ENCODE measurements at regions of chr10 and their contacts with region 1.

Region 1: GRCh38 chr10:59625721-59626522 is 83.7 kb downstream of the SLC16A9 start:
- DNase-seq: peak; percentile 24 to 26
- ATAC-seq: peak; percentile 89 to 93
- H3K4me3 ChIP-seq: no peak overlapping the region
- H3K27ac ChIP-seq: no peak overlapping the region
- H3K4me1 ChIP-seq: no peaks in the 10 kb centered on the region
- H3K27me3 ChIP-seq: no peaks in the 10 kb centered on the region
- CTCF ChIP-seq: peak; percentile 76 to 86 (median 84)
- POLR2A ChIP-seq: no peak

Region 2: DNA sequence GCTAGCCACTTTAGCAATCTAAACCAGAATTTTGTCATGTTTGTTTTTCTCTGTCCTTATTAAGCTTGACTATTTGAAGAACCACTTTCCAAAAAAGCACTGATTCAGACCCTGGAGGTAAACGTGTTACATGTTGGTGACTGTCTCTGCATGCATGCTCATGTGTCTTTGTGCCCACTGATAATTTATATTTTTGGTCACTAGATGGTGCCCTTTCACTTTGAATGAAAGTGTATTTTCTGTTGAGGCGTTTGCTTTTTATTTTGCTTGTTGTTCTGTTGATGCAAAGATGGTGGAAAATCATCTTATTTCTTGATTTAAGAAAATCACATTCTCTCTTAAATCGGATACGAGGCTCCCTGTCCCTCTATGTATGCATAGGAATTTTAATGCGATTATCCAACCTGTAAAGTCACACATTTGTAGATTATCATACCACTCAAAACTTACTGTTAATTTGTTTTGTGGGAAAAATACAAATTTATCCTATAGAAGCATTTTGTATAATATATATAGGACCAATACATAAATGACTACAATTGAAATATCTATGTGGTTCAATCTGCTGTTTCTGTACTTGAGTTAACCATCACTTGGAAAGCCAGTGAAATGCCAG is 843.9 kb before region 1 on chr10:
- in situ Hi-C with region 1: loop called in 2 of 4 experiments (anchors 25 kb)
- intact Hi-C with region 1: loop called (anchors 5 kb)
- DNase-seq: no peak
- ATAC-seq: peak; percentile 50 to 61
- H3K4me3 ChIP-seq: no peak overlapping the region
- H3K27ac ChIP-seq: peak overlapping the region; percentile 13 to 55 (median 40)
- H3K4me1 ChIP-seq: peaks cover 10 to 12% of the 10 kb centered on the region in 2 donors
- H3K27me3 ChIP-seq: no peaks in the 10 kb centered on the region
- CTCF ChIP-seq: peak in 4 of 5 experiments; percentile 33 to 60 (median 53)
- POLR2A ChIP-seq: no peak

Region 3: DNA sequence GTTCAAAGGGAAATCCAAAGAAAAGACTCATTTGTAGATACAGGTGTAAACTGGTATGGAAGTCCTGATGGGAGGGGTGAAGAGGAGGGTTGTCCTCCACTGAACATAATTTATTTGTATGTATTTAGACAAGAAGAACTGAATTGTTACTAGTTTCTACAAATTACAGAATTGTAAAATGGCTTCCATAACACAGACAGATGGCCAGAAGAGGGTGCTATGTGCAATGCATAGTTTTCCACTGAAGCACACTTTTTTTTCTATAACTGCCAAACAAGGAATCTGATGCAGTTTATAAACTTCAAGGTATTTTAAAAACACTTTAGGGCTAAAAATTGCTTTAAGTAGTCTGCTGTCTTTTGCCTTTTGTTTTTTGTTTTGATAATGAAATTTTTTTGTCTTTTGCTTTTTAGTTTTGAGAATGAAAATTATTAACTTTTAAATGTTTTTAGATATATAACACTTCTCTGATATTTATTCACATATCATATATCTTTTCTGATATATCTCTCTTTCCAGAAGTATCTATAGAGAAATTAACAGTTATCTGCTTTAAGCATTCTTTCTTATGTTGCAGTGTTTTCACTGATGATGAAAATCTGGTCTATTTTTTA is 391.0 kb before region 1 on chr10:
- in situ Hi-C with region 1: loop called (anchors 5 to 25 kb)
- intact Hi-C with region 1: loop called (anchors 1 kb)
- DNase-seq: no peak
- ATAC-seq: no peak
- H3K4me3 ChIP-seq: no peak overlapping the region
- H3K27ac ChIP-seq: no peak overlapping the region
- H3K4me1 ChIP-seq: no peaks in the 10 kb centered on the region
- H3K27me3 ChIP-seq: no peaks in the 10 kb centered on the region
- CTCF ChIP-seq: peak; percentile 13 to 57 (median 49)
- POLR2A ChIP-seq: no peak

Region 4: GRCh38 chr10:59393349-59393748 is 232.6 kb before region 1 on chr10:
- in situ Hi-C with region 1: no loop called
- intact Hi-C with region 1: no loop called
- DNase-seq: no peak
- ATAC-seq: no peak
- H3K4me3 ChIP-seq: no peak overlapping the region
- H3K27ac ChIP-seq: no peak overlapping the region
- H3K4me1 ChIP-seq: peaks cover 10 to 18% of the 10 kb centered on the region in 2 donors
- H3K27me3 ChIP-seq: no peaks in the 10 kb centered on the region
- CTCF ChIP-seq: no peak
- POLR2A ChIP-seq: no peak

Region 5: GRCh38 chr10:59709395-59710125 is 83.6 kb after region 1 on chr10 and contains the start of gene SLC16A9:
- in situ Hi-C with region 1: loop called in 1 of 4 experiments (anchors 10 kb)
- intact Hi-C with region 1: loop called (anchors 5 kb)
- DNase-seq: peak; percentile 36 to 46
- ATAC-seq: peak; percentile 81 to 83
- H3K4me3 ChIP-seq: peak within 1 kb of the TSS; percentile 71 to 86 (median 76)
- H3K27ac ChIP-seq: peak within 1 kb of the TSS; percentile 62 to 86 (median 78)
- H3K4me1 ChIP-seq: peaks cover 17 to 19% of the 10 kb centered on the region in 2 donors
- H3K27me3 ChIP-seq: no peaks in the 10 kb centered on the region
- CTCF ChIP-seq: peak; percentile 20 to 57 (median 42)
- POLR2A ChIP-seq: peak in 1 of 2 donors; percentile 15
- total RNA-seq, gene SLC16A9: 0.73 to 7.4 (median 3.3) TPM

Region 6: GRCh38 chr10:59830601-59831259 is 204.8 kb after region 1 on chr10:
- in situ Hi-C with region 1: no loop called
- intact Hi-C with region 1: loop called (anchors 2 kb)
- DNase-seq: peak in 1 of 2 donors; percentile 31
- ATAC-seq: peak in 1 of 2 donors; percentile 70
- H3K4me3 ChIP-seq: no peak overlapping the region
- H3K27ac ChIP-seq: no peak overlapping the region
- H3K4me1 ChIP-seq: peaks cover 30 to 40% of the 10 kb centered on the region in 2 donors
- H3K27me3 ChIP-seq: no peaks in the 10 kb centered on the region
- CTCF ChIP-seq: peak; percentile 65 to 82 (median 72)
- POLR2A ChIP-seq: no peak

Region 7: DNA sequence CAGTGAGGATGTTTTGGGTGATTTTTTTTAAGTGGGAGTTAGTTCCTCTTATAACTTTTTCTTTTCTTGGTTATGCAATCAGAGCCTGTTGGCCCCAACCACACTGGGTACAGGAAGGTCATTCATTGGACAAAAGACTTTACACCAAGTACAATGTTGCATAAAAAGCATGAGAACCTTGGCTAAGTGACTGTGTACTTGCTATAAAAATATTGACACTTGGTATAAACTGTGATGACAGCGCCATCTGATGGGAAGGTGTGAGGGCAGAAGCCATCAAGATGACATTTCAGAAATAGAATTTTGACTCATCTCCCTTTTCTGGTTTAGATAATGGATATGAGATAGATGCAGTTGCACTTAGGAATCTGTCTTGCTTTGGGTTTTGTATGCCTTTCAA is 406.8 kb after region 1 on chr10:
- in situ Hi-C with region 1: loop called (anchors 5 to 25 kb)
- intact Hi-C with region 1: loop called (anchors 1 kb)
- DNase-seq: peak; percentile 67 to 81
- ATAC-seq: peak; percentile 91 to 96
- H3K4me3 ChIP-seq: no peak overlapping the region
- H3K27ac ChIP-seq: peak overlapping the region; percentile 83 to 93 (median 87)
- H3K4me1 ChIP-seq: peaks cover 16 to 24% of the 10 kb centered on the region in 2 donors
- H3K27me3 ChIP-seq: no peaks in the 10 kb centered on the region
- CTCF ChIP-seq: peak; percentile 40 to 65 (median 53)
- POLR2A ChIP-seq: no peak

Region 8: GRCh38 chr10:60148264-60148840 is 522.4 kb after region 1 on chr10:
- in situ Hi-C with region 1: no loop called
- intact Hi-C with region 1: no loop called
- DNase-seq: peak in 1 of 2 donors; percentile 13
- ATAC-seq: peak; percentile 80 to 84
- H3K4me3 ChIP-seq: no peak overlapping the region
- H3K27ac ChIP-seq: peak overlapping the region; percentile 16 to 51 (median 40)
- H3K4me1 ChIP-seq: peaks cover 12 to 17% of the 10 kb centered on the region in 2 donors
- H3K27me3 ChIP-seq: no peaks in the 10 kb centered on the region
- CTCF ChIP-seq: no peak
- POLR2A ChIP-seq: no peak